CD4-positive, alpha-beta memory T cell (primary cell): ENCODE measurements at regions of chr12 and their contacts with region 1.

Region 1: GRCh38 chr12:8045952-8046944 is 13.7 kb downstream of the FOXJ2 start:
- DNase-seq: peak; percentile 77 to 82 (median 78)
- H3K4me3 ChIP-seq: no peak overlapping the region
- H3K4me3 Mint-ChIP-seq: peak overlapping the region in 1 of 8 donors; percentile 36
- H3K27ac ChIP-seq: no peak overlapping the region
- H3K27ac Mint-ChIP-seq: peak overlapping the region; percentile 3 to 76 (median 66)
- H3K4me1 ChIP-seq: peaks cover 6% of the 10 kb centered on the region
- H3K4me1 Mint-ChIP-seq: peaks cover 7 to 16% (median 8%) of the 10 kb centered on the region in 4 donors
- H3K27me3 ChIP-seq: no peaks in the 10 kb centered on the region
- H3K27me3 Mint-ChIP-seq: no peaks in the 10 kb centered on the region

Region 2: GRCh38 chr12:6764011-6764828 is 1282.0 kb before region 1 on chr12:
- CTCF ChIA-PET with region 1: no interaction called
- POLR2A ChIA-PET with region 1: no interaction called
- intact Hi-C with region 1: no loop called
- DNase-seq: peak; percentile 47 to 79 (median 56)
- H3K4me3 ChIP-seq: no peak overlapping the region
- H3K4me3 Mint-ChIP-seq: peak overlapping the region; percentile 3 to 72 (median 62)
- H3K27ac ChIP-seq: no peak overlapping the region
- H3K27ac Mint-ChIP-seq: peak overlapping the region in 2 of 7 donors; percentile 31 to 46
- H3K4me1 ChIP-seq: peaks cover 27% of the 10 kb centered on the region
- H3K4me1 Mint-ChIP-seq: peaks cover 15 to 40% (median 28%) of the 10 kb centered on the region in 4 donors
- H3K27me3 ChIP-seq: peaks cover 15% of the 10 kb centered on the region
- H3K27me3 Mint-ChIP-seq: peaks cover 16 to 25% of the 10 kb centered on the region in 2 donors

Region 3: DNA sequence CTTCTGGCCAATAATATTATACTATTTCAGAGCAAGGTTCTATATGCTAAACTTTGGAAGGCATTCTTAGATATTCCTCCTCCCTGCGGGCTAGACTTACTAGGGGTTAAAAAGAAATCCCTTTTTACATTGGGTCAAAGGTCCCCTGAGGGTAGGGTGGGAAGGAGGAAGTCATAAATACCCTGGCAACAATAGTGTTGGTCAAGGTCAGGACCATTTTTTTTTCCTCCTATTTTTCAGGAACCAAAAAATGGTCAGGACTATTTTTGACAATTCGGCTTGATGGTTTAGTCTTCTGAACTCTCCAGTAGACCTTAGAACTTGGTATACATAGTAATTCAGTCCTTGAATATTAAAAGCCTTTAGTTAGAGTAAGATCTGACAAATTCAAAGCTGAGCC is 261.5 kb before region 1 on chr12:
- CTCF ChIA-PET with region 1: no interaction called
- POLR2A ChIA-PET with region 1: no interaction called
- intact Hi-C with region 1: no loop called
- DNase-seq: no peak
- H3K4me3 ChIP-seq: no peak overlapping the region
- H3K4me3 Mint-ChIP-seq: no peak overlapping the region
- H3K27ac ChIP-seq: no peak overlapping the region
- H3K27ac Mint-ChIP-seq: no peak overlapping the region
- H3K4me1 ChIP-seq: no peaks in the 10 kb centered on the region
- H3K4me1 Mint-ChIP-seq: no peaks in the 10 kb centered on the region
- H3K27me3 ChIP-seq: no peaks in the 10 kb centered on the region
- H3K27me3 Mint-ChIP-seq: peaks cover 7 to 17% of the 10 kb centered on the region in 2 donors

Region 4: DNA sequence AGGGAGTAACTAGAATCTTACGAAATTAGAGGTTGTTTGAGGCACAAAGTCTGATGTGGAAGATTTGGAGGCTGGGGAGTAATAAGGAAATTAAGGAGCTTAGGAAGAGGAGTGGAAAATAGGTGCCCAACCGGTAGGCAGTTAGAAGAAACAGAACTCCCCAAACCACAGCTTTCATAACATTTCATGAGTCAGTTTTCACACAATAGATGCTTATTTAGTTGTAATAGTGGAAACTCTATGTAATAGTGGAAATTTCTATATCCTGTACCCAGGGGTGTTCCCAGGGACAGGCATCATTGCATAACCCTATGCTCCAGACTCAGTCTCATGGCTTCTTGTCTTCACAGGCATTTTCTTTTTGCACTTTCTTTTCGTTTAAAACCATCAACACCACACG is 11.6 kb after region 1 on chr12:
- CTCF ChIA-PET with region 1: interaction called, 27 read pairs
- POLR2A ChIA-PET with region 1: no interaction called
- intact Hi-C with region 1: no loop called
- DNase-seq: no peak
- H3K4me3 ChIP-seq: no peak overlapping the region
- H3K4me3 Mint-ChIP-seq: no peak overlapping the region
- H3K27ac ChIP-seq: no peak overlapping the region
- H3K27ac Mint-ChIP-seq: peak overlapping the region in 5 of 7 donors; percentile 22 to 92 (median 45)
- H3K4me1 ChIP-seq: no peaks in the 10 kb centered on the region
- H3K4me1 Mint-ChIP-seq: peaks cover 0 to 6% (median under 1%) of the 10 kb centered on the region in 4 donors
- H3K27me3 ChIP-seq: no peaks in the 10 kb centered on the region
- H3K27me3 Mint-ChIP-seq: no peaks in the 10 kb centered on the region

Region 5: GRCh38 chr12:8065991-8066594 is 19.8 kb after region 1 on chr12 and contains the start of gene C3AR1:
- CTCF ChIA-PET with region 1: interaction called, 46 read pairs
- POLR2A ChIA-PET with region 1: interaction called, 7 read pairs
- intact Hi-C with region 1: loop called (anchors 1 kb)
- DNase-seq: peak; percentile 68 to 85 (median 76)
- H3K4me3 ChIP-seq: peak within 1 kb of the TSS in 1 of 2 donors; percentile 16
- H3K4me3 Mint-ChIP-seq: peak within 1 kb of the TSS; percentile 39 to 83 (median 79)
- H3K27ac ChIP-seq: peak within 1 kb of the TSS; percentile 44
- H3K27ac Mint-ChIP-seq: peak within 1 kb of the TSS; percentile 80 to 98 (median 94)
- H3K4me1 ChIP-seq: peaks cover 34% of the 10 kb centered on the region
- H3K4me1 Mint-ChIP-seq: peaks cover 27 to 55% (median 40%) of the 10 kb centered on the region in 4 donors
- H3K27me3 ChIP-seq: no peaks in the 10 kb centered on the region
- H3K27me3 Mint-ChIP-seq: no peaks in the 10 kb centered on the region
- total RNA-seq, gene C3AR1: 4.6 to 6.1 TPM

Region 6: GRCh38 chr12:8420506-8420905 is 374.3 kb after region 1 on chr12:
- CTCF ChIA-PET with region 1: no interaction called
- POLR2A ChIA-PET with region 1: no interaction called
- intact Hi-C with region 1: no loop called
- DNase-seq: no peak
- H3K4me3 ChIP-seq: no peak overlapping the region
- H3K4me3 Mint-ChIP-seq: no peak overlapping the region
- H3K27ac ChIP-seq: no peak overlapping the region
- H3K27ac Mint-ChIP-seq: no peak overlapping the region
- H3K4me1 ChIP-seq: no peaks in the 10 kb centered on the region
- H3K4me1 Mint-ChIP-seq: no peaks in the 10 kb centered on the region
- H3K27me3 ChIP-seq: no peaks in the 10 kb centered on the region
- H3K27me3 Mint-ChIP-seq: no peaks in the 10 kb centered on the region